ENCODE measurements at regions of chr21 and their contacts with region 1.

Region 1: DNA sequence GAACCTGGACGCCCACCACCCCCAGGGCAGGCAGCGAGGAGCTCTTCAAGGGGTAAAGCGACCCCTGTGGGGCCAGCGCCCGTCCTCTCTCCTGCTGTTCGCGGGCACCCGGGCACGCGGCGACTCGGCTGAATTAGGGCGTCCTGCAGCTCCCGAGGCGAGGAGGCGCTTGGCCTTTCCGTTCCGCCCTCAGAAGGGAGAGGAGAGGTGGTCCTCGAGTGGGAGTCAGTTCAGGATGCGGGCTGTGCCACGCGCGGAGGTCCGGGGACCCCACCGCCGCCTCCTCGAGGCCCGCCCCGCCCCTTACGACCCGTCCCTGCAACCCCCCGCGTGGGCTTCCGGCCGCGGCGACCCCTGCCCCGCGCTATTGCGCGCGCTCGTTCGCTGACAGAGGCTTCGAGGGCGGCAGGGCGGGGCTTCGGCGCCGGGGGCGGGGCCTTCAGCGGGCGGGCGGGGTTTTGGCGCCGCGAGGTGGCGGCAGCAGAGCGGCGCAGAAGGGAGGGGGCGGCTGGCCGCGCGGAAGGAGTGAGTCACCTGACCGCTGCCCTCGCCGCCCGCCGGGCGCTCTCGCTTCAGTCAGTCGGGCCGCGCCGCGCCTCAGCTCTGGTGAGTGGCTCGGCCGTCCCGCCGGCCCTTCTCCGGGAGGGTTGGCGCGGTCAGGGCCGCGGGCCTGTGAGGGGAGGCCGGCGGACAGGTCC is at the start of gene BACH1:
- DNase-seq: peak; percentile 88
- ATAC-seq: peak; percentile 65
- H3K4me3 Mint-ChIP-seq: peak within 1 kb of the TSS; percentile 87
- H3K27ac Mint-ChIP-seq: peak within 1 kb of the TSS; percentile 94
- H3K4me1 Mint-ChIP-seq: peaks cover 71% of the 10 kb centered on the region
- H3K27me3 Mint-ChIP-seq: no peaks in the 10 kb centered on the region
- CTCF ChIP-seq: peak; percentile 28
- total RNA-seq, gene BACH1: 27.3 to 28.2 TPM

Region 2: DNA sequence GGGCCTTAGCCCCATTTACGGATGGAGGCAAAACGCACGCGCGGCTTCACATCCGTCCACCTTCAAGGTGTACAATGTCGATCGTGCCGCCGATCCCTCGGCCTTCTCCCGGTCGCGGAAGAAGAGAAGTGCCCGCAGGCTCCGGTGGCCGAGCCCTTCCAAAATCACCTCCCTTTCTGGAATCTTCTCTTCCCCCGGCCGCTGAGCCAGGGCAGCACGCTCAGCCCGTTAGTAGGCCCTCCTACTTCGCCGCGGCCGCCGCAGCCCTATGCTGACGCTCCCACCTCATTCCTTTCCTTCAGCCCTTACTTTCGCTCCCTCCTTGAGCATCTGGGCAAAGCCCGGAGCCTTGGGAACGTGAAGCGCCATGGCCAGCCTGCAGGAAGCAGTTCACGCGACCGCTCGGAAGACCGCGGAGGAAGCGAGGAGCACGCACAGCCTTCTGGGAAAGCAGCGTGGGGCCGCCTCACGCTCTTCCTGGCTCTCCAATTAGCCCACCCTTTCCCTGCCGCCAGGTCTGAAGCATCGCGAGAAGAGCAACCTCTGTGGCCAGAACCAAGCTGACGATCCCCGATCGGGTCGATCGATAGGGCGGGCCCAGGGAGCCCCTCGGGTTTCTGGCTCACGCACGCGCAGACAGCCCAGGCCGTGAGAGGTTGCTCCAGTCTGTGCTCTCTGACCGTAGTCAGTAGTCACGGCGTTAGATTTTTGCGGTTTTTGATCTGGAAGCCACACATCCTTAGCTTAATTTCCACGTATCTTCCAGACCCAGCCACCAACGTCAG is 225.1 kb before region 1 on chr21 and contains the start of gene CCT8:
- CTCF ChIA-PET with region 1: interaction called, 3 read pairs
- POLR2A ChIA-PET with region 1: interaction called, 50 read pairs
- intact Hi-C with region 1: loop called (anchors 2 kb)
- DNase-seq: peak; percentile 99
- ATAC-seq: peak; percentile 92
- H3K4me3 Mint-ChIP-seq: peak within 1 kb of the TSS; percentile 100
- H3K27ac Mint-ChIP-seq: peak within 1 kb of the TSS; percentile 99
- H3K4me1 Mint-ChIP-seq: peaks cover 53% of the 10 kb centered on the region
- H3K27me3 Mint-ChIP-seq: no peaks in the 10 kb centered on the region
- CTCF ChIP-seq: no peak
- total RNA-seq, gene CCT8: 474 to 489 TPM

Region 3: DNA sequence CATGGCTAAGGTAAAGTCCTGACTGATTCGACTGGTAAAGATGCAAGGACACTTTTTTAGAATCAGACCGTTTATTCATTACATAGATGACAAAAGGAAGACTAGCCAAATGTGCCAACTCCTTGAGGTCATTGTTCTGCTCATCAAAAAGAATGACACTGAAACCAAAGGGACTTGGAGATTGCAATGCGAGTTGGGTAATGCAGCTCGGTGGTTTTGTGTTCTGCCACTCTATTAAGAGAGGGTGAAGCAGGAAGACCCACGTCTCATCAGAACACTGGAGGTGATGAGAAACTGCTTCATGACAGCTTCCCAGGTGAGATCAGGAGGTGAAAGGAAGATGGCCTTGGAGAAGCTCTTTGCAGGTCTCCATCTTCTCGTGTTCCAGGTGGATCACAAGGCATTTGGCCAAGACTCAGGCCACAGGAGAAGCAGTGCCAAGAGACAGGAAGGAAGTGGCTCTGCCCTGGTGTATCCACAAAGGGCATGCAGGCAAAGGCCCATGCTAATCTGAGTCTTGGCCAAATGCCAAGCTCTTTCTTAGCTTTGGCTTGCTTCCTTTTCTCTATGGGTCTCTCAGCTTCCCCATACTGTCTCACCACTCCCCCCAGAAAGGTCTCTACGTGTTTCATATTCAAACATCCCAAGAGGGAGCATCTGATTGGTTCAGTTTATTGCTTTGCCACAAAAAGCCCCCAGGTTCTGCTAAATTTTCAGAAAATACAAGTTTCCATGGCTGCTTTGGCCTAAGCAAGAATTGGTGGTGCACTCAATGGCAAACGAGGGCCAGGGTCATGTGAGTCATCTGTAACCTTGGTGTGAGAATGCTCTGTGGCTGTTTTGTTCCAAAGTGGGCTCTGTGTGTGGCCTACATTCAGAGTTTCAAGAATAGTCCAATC is 219.4 kb before region 1 on chr21:
- CTCF ChIA-PET with region 1: interaction called, 4 read pairs
- POLR2A ChIA-PET with region 1: interaction called, 50 read pairs
- intact Hi-C with region 1: loop called (anchors 2 kb)
- DNase-seq: peak; percentile 75
- ATAC-seq: peak; percentile 70
- H3K4me3 Mint-ChIP-seq: peak overlapping the region; percentile 75
- H3K27ac Mint-ChIP-seq: peak overlapping the region; percentile 95
- H3K4me1 Mint-ChIP-seq: peaks cover 52% of the 10 kb centered on the region
- H3K27me3 Mint-ChIP-seq: no peaks in the 10 kb centered on the region
- CTCF ChIP-seq: no peak

Region 4: GRCh38 chr21:29091032-29091431 is 207.5 kb before region 1 on chr21:
- CTCF ChIA-PET with region 1: interaction called, 3 read pairs
- POLR2A ChIA-PET with region 1: interaction called, 7 read pairs
- intact Hi-C with region 1: loop called (anchors 5 kb)
- DNase-seq: no peak
- ATAC-seq: no peak
- H3K4me3 Mint-ChIP-seq: no peak overlapping the region
- H3K27ac Mint-ChIP-seq: no peak overlapping the region
- H3K4me1 Mint-ChIP-seq: peaks cover 2% of the 10 kb centered on the region
- H3K27me3 Mint-ChIP-seq: no peaks in the 10 kb centered on the region
- CTCF ChIP-seq: no peak

Region 5: GRCh38 chr21:29195981-29196669 is 102.4 kb before region 1 on chr21:
- CTCF ChIA-PET with region 1: interaction called, 3 read pairs
- POLR2A ChIA-PET with region 1: interaction called, 4 read pairs
- intact Hi-C with region 1: loop called (anchors 5 kb)
- DNase-seq: peak; percentile 88
- ATAC-seq: peak; percentile 99
- H3K4me3 Mint-ChIP-seq: peak overlapping the region; percentile 70
- H3K27ac Mint-ChIP-seq: peak overlapping the region; percentile 92
- H3K4me1 Mint-ChIP-seq: peaks cover 29% of the 10 kb centered on the region
- H3K27me3 Mint-ChIP-seq: no peaks in the 10 kb centered on the region
- CTCF ChIP-seq: peak; percentile 75

Region 6: DNA sequence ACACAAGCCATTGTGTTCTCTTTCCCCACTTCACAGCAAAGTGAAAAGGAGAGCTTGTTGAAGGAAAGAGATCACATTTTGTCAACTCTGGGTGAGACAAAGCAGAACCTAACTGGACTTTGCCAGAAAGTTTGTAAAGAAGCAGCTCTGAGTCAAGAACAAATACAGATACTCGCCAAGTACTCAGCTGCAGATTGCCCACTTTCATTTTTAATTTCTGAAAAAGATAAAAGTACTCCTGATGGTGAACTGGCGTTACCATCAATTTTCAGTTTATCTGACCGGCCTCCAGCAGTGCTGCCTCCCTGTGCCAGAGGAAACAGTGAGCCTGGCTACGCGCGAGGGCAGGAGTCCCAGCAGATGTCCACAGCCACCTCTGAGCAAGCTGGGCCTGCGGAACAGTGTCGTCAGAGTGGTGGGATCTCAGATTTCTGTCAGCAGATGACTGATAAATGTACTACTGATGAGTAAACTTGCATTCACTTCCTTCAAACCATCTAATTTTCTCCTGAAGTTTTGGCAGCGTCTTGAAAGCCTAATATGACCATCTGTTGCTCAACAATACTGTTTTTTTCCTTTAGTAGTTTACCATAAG is 44.0 kb after region 1 on chr21:
- CTCF ChIA-PET with region 1: interaction called, 3 read pairs
- POLR2A ChIA-PET with region 1: interaction called, 13 read pairs
- intact Hi-C with region 1: loop called (anchors 5 kb)
- DNase-seq: peak; percentile 68
- ATAC-seq: peak; percentile 93
- H3K4me3 Mint-ChIP-seq: peak overlapping the region; percentile 31
- H3K27ac Mint-ChIP-seq: peak overlapping the region; percentile 81
- H3K4me1 Mint-ChIP-seq: peaks cover 39% of the 10 kb centered on the region
- H3K27me3 Mint-ChIP-seq: no peaks in the 10 kb centered on the region
- CTCF ChIP-seq: no peak

Region 7: GRCh38 chr21:29382006-29382654 is 83.6 kb after region 1 on chr21:
- CTCF ChIA-PET with region 1: no interaction called
- POLR2A ChIA-PET with region 1: no interaction called
- intact Hi-C with region 1: no loop called
- DNase-seq: no peak
- ATAC-seq: no peak
- H3K4me3 Mint-ChIP-seq: no peak overlapping the region
- H3K27ac Mint-ChIP-seq: no peak overlapping the region
- H3K4me1 Mint-ChIP-seq: no peaks in the 10 kb centered on the region
- H3K27me3 Mint-ChIP-seq: no peaks in the 10 kb centered on the region
- CTCF ChIP-seq: no peak

Region 8: DNA sequence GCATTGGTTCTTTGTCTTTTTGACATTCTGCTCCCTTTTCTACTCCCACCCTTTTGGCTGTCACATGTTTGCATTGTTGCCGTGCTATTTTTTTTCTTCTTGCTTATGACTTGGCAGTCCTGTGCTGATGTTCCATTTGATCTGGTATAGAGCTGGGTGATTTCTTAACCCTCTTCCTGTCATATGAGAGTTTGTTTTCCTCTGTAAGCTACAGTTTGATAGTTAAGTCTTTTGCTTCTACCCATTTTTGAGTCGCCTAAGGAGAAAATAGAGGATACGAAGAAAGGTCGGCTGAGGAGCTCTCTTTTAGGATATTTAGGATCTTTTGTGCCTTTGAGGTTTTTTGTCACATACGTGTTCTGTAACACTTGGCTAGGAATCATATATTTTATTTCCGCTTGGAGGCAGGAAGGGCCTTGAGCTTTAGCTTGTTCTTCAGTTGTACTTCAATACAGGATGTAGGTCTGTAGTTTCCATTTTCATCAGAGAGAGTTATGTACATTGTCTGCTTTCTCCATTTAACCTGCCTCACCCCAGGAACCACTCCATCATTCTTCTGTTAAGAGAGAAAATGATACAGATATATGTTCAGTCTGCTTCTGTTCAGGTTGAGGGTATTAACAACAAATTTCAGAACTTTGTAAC is 150.9 kb after region 1 on chr21:
- CTCF ChIA-PET with region 1: no interaction called
- POLR2A ChIA-PET with region 1: interaction called, 10 read pairs
- intact Hi-C with region 1: no loop called
- DNase-seq: peak; percentile 36
- ATAC-seq: peak; percentile 89
- H3K4me3 Mint-ChIP-seq: peak overlapping the region; percentile 63
- H3K27ac Mint-ChIP-seq: peak overlapping the region; percentile 98
- H3K4me1 Mint-ChIP-seq: peaks cover 29% of the 10 kb centered on the region
- H3K27me3 Mint-ChIP-seq: no peaks in the 10 kb centered on the region
- CTCF ChIP-seq: no peak

Measured in activated CD8-positive, alpha-beta T cell treated with anti-CD3 and anti-CD28 coated beads for 36 hours (primary cell).